PC-3 (cell line): ENCODE measurements at regions of chr12 and their contacts with region 1.

Region 1: GRCh38 chr12:110149086-110149660 is 25.0 kb downstream of the IFT81 start:
- DNase-seq: no peak
- ATAC-seq: no peak
- H3K4me3 ChIP-seq: no peak overlapping the region
- H3K27ac ChIP-seq: no peak overlapping the region
- H3K4me1 ChIP-seq: no peaks in the 10 kb centered on the region
- H3K27me3 ChIP-seq: no peaks in the 10 kb centered on the region
- CTCF ChIP-seq: no peak

Region 2: DNA sequence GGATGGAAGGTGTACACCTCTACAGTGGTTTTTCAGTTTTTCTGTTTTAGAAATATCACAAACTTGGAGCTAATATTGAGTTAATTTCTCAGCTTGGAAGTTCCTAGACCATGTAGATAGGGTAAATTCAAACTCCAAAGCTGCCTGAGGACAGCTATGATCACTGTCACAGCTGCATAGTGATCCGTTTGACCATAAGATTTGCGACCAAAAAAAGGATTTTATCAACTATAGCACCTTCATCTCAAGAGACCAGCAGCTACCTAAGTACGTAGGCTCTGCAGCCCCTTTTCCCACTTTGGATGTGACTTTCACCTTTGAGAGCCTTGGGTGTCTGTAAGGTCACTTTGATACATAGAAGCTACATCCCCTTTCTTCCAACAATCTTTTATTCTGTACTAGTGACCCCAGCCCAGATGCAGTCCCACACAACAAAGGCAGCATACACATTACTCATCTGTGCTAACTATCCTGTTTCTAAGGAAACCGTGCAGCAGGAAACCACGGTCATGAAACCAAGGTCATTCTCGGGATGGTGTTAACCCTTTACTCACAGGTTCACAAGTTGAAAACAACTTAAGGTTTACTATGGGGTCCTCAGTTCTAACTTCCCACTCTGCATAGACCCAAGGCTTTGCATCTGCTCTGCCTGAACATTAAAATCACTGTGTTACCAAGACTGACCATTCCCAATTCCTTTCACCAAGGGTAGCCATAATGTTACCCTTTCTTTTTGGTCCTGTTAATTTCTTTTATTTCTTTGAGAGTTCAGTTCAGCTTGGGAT is 50.4 kb after region 1 on chr12:
- CTCF ChIA-PET with region 1: no interaction called
- POLR2A ChIA-PET with region 1: no interaction called
- intact Hi-C with region 1: loop called (anchors 5 kb)
- DNase-seq: peak; percentile 30
- ATAC-seq: peak; percentile 86
- H3K4me3 ChIP-seq: no peak overlapping the region
- H3K27ac ChIP-seq: no peak overlapping the region
- H3K4me1 ChIP-seq: peaks cover 10% of the 10 kb centered on the region
- H3K27me3 ChIP-seq: no peaks in the 10 kb centered on the region
- CTCF ChIP-seq: no peak